ENCODE measurements at regions of chr1 and their contacts with region 1.

Region 1: GRCh38 chr1:21782868-21783678 is at the start of gene USP48:
- DNase-seq: peak; percentile 97
- ATAC-seq: peak; percentile 97
- total RNA-seq, gene USP48: 41.1 to 41.3 TPM

Region 2: GRCh38 chr1:21647431-21648351 is 135.4 kb before region 1 on chr1:
- intact Hi-C with region 1: no loop called
- DNase-seq: no peak
- ATAC-seq: no peak

Region 3: DNA sequence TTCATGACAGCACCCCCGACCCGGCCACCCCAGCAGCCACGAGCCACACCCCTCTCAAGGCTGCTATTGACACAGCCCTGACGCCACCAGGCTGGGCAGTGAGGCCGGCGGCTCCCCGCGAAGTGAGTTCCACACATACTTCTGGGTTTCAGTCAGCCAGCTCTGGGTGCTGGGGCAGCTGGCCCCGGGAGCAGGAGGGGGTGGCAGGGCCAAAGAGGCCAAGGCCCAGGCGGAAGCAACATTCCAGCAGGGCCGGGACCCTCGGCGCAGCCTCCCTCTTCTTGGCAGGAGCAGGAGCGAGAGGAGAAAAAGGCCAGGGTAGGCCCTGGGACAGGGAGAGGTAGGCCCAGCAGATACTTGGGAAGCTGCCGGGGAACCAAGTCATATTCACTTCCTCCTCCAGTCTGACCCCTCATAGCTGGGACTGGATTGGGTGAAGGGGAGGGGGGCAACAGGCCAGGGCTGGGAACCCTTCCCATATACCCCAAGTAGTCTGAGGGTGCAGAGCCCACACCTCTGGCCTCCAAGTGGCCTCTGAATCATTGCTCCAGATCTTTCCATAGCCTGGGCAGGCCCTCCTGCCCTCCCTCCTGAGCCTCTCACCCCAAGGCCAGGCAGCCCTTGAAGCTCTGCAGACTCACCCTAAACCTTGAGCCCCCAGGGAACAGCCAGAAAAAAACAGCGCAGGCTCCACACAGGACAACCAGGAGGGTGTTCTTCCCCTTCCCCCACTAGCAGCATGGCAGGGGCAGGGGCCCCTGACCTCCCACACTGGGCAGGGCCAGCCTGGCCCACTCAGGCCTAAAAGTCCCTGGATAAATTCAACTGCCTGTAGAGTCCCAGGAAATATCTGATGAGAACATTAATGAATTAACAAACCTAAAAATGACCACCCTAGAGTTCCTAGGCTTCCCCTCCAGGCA is 148.4 kb after region 1 on chr1:
- intact Hi-C with region 1: no loop called
- DNase-seq: peak; percentile 80
- ATAC-seq: peak; percentile 56

Region 4: GRCh38 chr1:21956720-21957552 is 173.9 kb after region 1 on chr1:
- intact Hi-C with region 1: loop called in 1 of 2 experiments (anchors 10 kb)
- DNase-seq: peak; percentile 79
- ATAC-seq: peak; percentile 71 to 93